Activated CD4-positive, alpha-beta T cell treated with anti-CD3 and anti-CD28 coated beads for 36 hours (primary cell): ENCODE measurements at regions of chr6 and their contacts with region 1.

Region 1: DNA sequence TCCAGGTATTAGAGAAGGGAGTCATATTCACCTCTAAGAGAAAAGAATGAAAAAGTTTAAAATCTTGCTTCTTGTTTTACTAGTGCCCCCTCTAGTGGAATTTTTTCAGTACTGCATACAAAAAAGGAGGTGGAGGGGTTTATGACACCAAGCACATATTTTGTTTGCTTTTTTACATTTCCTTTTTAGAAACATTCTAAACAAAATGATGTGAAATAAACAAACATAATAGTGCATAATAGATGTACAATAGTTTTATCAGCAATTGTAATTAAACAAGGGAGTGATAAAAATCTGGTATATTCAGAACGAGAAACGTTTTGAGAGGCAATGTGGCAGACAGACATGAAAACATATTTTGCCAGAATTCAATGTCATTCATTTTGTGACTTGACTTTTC is 111.0 kb upstream of the TFAP2D start:
- DNase-seq: no peak
- ATAC-seq: no peak
- H3K4me3 Mint-ChIP-seq: no peak overlapping the region
- H3K27ac Mint-ChIP-seq: no peak overlapping the region
- H3K4me1 Mint-ChIP-seq: no peaks in the 10 kb centered on the region
- H3K27me3 Mint-ChIP-seq: no peaks in the 10 kb centered on the region

Region 2: GRCh38 chr6:50128420-50129005 is 473.8 kb before region 1 on chr6:
- CTCF ChIA-PET with region 1: interaction called, 8 read pairs
- POLR2A ChIA-PET with region 1: no interaction called
- intact Hi-C with region 1: loop called (anchors 1 kb)
- DNase-seq: no peak
- ATAC-seq: no peak
- H3K4me3 Mint-ChIP-seq: no peak overlapping the region
- H3K27ac Mint-ChIP-seq: no peak overlapping the region
- H3K4me1 Mint-ChIP-seq: no peaks in the 10 kb centered on the region
- H3K27me3 Mint-ChIP-seq: no peaks in the 10 kb centered on the region

Region 3: DNA sequence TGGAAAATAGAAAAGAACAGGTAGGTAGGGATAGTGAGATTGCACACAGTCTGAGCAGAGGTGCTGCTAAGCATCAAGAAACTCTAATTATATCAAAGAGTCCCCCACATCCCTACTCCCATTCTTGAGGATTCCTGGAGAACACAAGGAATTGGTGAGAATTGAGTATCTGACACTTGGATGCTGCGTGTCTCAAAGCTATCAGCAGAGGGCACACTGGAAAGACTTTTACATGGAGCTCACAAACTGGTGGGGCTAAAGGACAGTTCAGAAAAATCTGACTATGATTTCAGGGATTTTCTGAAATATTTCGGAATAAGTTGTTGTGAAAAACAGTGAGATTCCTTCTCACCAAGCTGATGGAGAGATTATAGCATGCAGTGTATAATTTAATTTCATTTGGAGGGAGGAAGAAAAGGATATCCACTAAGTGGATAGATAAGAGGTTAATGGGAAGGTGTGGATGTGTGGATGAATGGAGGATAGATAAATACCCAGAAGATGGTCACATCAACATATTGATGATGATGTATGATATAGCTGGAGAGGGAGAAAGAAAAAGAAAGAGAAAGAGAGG is 337.2 kb before region 1 on chr6:
- CTCF ChIA-PET with region 1: no interaction called
- POLR2A ChIA-PET with region 1: no interaction called
- intact Hi-C with region 1: loop called in 1 of 2 experiments (anchors 10 kb)
- DNase-seq: no peak
- ATAC-seq: no peak
- H3K4me3 Mint-ChIP-seq: no peak overlapping the region
- H3K27ac Mint-ChIP-seq: no peak overlapping the region
- H3K4me1 Mint-ChIP-seq: no peaks in the 10 kb centered on the region
- H3K27me3 Mint-ChIP-seq: no peaks in the 10 kb centered on the region